Naive thymus-derived CD4-positive, alpha-beta T cell (primary cell): ENCODE measurements at regions of chr2 and their contacts with region 1.

Region 1: GRCh38 chr2:60881047-60881932 is at the start of gene REL:
- DNase-seq: peak; percentile 77 to 95 (median 88)
- ATAC-seq: peak; percentile 92
- H3K4me3 ChIP-seq: peak within 1 kb of the TSS; percentile 83
- H3K4me3 Mint-ChIP-seq: peak within 1 kb of the TSS; percentile 91 to 98 (median 96)
- H3K27ac ChIP-seq: peak within 1 kb of the TSS; percentile 100
- H3K27ac Mint-ChIP-seq: peak within 1 kb of the TSS; percentile 93 to 100 (median 98)
- H3K4me1 ChIP-seq: peaks cover 11 to 24% of the 10 kb centered on the region in 2 donors
- H3K4me1 Mint-ChIP-seq: peaks cover 22 to 39% (median 33%) of the 10 kb centered on the region in 7 donors
- H3K27me3 ChIP-seq: no peaks in the 10 kb centered on the region
- H3K27me3 Mint-ChIP-seq: no peaks in the 10 kb centered on the region
- total RNA-seq, gene REL: 18.9 to 78.8 (median 26.4) TPM

Region 2: GRCh38 chr2:60756191-60757041 is 124.9 kb before region 1 on chr2 and contains the start of gene PAPOLG:
- CTCF ChIA-PET with region 1: no interaction called
- POLR2A ChIA-PET with region 1: interaction called, 14 read pairs
- intact Hi-C with region 1: loop called (anchors 1 kb)
- DNase-seq: peak; percentile 90 to 97 (median 93)
- ATAC-seq: peak; percentile 100
- H3K4me3 ChIP-seq: peak within 1 kb of the TSS; percentile 86
- H3K4me3 Mint-ChIP-seq: peak within 1 kb of the TSS; percentile 94 to 100 (median 98)
- H3K27ac ChIP-seq: peak within 1 kb of the TSS; percentile 85
- H3K27ac Mint-ChIP-seq: peak within 1 kb of the TSS; percentile 94 to 100 (median 98)
- H3K4me1 ChIP-seq: peaks cover 0 to 13% of the 10 kb centered on the region in 2 donors
- H3K4me1 Mint-ChIP-seq: peaks cover 24 to 53% (median 46%) of the 10 kb centered on the region in 7 donors
- H3K27me3 ChIP-seq: no peaks in the 10 kb centered on the region
- H3K27me3 Mint-ChIP-seq: no peaks in the 10 kb centered on the region
- total RNA-seq, gene PAPOLG: 15.1 to 42.4 (median 22.9) TPM

Region 3: DNA sequence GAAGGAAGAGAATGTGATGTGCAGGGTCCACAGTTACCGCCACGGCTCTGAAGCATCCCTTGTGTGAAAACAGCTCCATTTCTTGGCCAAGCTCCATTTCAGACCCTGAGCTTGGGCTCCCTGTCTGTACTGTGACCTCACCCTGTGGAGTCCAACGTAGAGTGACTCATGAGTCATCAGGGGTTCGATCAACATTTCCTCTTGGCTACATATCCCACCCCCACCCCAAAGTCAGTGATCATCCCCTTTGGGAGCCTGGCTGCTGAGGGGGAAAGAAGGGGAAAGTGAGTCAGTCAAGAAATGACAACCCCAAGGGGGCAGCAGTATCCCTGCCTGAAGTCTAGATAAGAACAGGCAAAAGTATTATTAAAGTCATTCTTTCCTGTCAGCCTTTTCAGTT is 63.0 kb before region 1 on chr2:
- CTCF ChIA-PET with region 1: interaction called, 3 read pairs
- POLR2A ChIA-PET with region 1: interaction called, 5 read pairs
- intact Hi-C with region 1: loop called (anchors 1 kb)
- DNase-seq: peak in 2 of 9 donors; percentile 29 to 53
- ATAC-seq: no peak
- H3K4me3 ChIP-seq: no peak overlapping the region
- H3K4me3 Mint-ChIP-seq: peak overlapping the region in 2 of 10 donors; percentile 5 to 34
- H3K27ac ChIP-seq: no peak overlapping the region
- H3K27ac Mint-ChIP-seq: peak overlapping the region in 7 of 9 donors; percentile 28 to 92 (median 61)
- H3K4me1 ChIP-seq: peaks cover 24% of the 10 kb centered on the region in 2 donors
- H3K4me1 Mint-ChIP-seq: peaks cover 22 to 46% (median 37%) of the 10 kb centered on the region in 7 donors
- H3K27me3 ChIP-seq: no peaks in the 10 kb centered on the region
- H3K27me3 Mint-ChIP-seq: peaks cover 0 to 3% (median 0%) of the 10 kb centered on the region in 5 donors

Region 4: DNA sequence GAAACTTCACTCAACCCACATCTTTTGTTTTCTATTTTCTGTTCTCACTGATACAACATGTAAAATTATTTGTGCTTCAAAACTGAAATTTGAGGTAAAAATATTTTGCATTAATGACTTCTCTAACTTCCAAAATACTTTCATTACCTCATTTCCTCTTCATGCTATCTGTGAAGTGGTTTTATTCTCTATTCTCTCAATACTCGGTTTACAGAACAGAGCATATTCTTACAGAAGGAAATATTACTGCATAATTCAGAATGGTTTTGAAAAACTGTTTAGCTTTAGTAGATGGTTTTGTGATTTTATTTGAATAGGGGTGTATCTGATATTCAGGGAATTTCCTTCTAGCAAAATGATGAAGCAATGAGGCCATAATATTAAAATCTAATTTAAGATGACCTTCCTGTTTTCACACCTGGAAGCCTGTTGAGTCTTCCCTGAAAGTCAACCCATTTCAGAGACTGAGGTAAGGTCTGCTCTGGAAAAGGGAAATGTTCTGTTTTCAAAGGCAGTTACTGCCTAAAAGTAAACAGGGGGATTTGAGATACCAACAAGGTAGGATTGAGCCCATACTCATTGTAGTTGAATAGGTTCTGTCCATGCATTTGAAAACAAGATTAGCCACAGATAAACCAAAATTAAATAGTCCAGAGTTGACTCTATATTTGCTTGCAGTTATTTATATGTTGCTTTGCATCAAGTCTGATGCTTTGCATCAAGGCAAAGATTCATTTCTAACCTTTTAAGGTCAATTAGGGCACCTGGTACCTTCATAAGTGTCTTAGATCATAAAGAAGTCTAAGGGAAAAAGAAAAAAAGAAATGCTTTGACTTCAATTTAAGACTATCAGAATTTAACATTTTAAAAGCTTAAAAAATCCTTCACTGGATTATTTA is 85.5 kb after region 1 on chr2:
- CTCF ChIA-PET with region 1: no interaction called
- POLR2A ChIA-PET with region 1: interaction called, 5 read pairs
- intact Hi-C with region 1: loop called (anchors 2 to 5 kb)
- DNase-seq: peak in 3 of 9 donors; percentile 7 to 23 (median 9)
- ATAC-seq: peak; percentile 29
- H3K4me3 ChIP-seq: no peak overlapping the region
- H3K4me3 Mint-ChIP-seq: peak overlapping the region; percentile 31 to 78 (median 64)
- H3K27ac ChIP-seq: no peak overlapping the region
- H3K27ac Mint-ChIP-seq: peak overlapping the region; percentile 22 to 80 (median 59)
- H3K4me1 ChIP-seq: peaks cover 22 to 28% of the 10 kb centered on the region in 2 donors
- H3K4me1 Mint-ChIP-seq: peaks cover 12 to 54% (median 43%) of the 10 kb centered on the region in 7 donors
- H3K27me3 ChIP-seq: no peaks in the 10 kb centered on the region
- H3K27me3 Mint-ChIP-seq: no peaks in the 10 kb centered on the region

Region 5: GRCh38 chr2:61065715-61066709 is 184.7 kb after region 1 on chr2 and contains the start of gene SANBR:
- CTCF ChIA-PET with region 1: no interaction called
- POLR2A ChIA-PET with region 1: no interaction called
- intact Hi-C with region 1: loop called (anchors 1 to 2 kb)
- DNase-seq: peak; percentile 78 to 90 (median 83)
- ATAC-seq: peak; percentile 99
- H3K4me3 ChIP-seq: peak within 1 kb of the TSS; percentile 59
- H3K4me3 Mint-ChIP-seq: peak within 1 kb of the TSS; percentile 79 to 98 (median 95)
- H3K27ac ChIP-seq: peak within 1 kb of the TSS; percentile 49
- H3K27ac Mint-ChIP-seq: peak within 1 kb of the TSS; percentile 12 to 94 (median 79)
- H3K4me1 ChIP-seq: peaks cover 0 to 6% of the 10 kb centered on the region in 2 donors
- H3K4me1 Mint-ChIP-seq: peaks cover 0 to 17% (median 5%) of the 10 kb centered on the region in 7 donors
- H3K27me3 ChIP-seq: no peaks in the 10 kb centered on the region
- H3K27me3 Mint-ChIP-seq: peaks cover 0 to 2% (median 0%) of the 10 kb centered on the region in 5 donors
- total RNA-seq, gene SANBR: 2.0 to 5.9 (median 3.6) TPM

Region 6: GRCh38 chr2:61470965-61471904 is 589.9 kb after region 1 on chr2 and contains the start of gene USP34:
- CTCF ChIA-PET with region 1: no interaction called
- POLR2A ChIA-PET with region 1: no interaction called
- intact Hi-C with region 1: loop called in 1 of 2 experiments (anchors 2 kb)
- DNase-seq: peak; percentile 77 to 93 (median 88)
- ATAC-seq: peak; percentile 91
- H3K4me3 ChIP-seq: peak within 1 kb of the TSS; percentile 97
- H3K4me3 Mint-ChIP-seq: peak within 1 kb of the TSS; percentile 85 to 99 (median 96)
- H3K27ac ChIP-seq: peak within 1 kb of the TSS; percentile 98
- H3K27ac Mint-ChIP-seq: peak within 1 kb of the TSS; percentile 96 to 99 (median 97)
- H3K4me1 ChIP-seq: peaks cover 14 to 27% of the 10 kb centered on the region in 2 donors
- H3K4me1 Mint-ChIP-seq: peaks cover 11 to 45% (median 33%) of the 10 kb centered on the region in 7 donors
- H3K27me3 ChIP-seq: no peaks in the 10 kb centered on the region
- H3K27me3 Mint-ChIP-seq: no peaks in the 10 kb centered on the region
- total RNA-seq, gene USP34: 109 to 186 (median 165) TPM

Region 7: DNA sequence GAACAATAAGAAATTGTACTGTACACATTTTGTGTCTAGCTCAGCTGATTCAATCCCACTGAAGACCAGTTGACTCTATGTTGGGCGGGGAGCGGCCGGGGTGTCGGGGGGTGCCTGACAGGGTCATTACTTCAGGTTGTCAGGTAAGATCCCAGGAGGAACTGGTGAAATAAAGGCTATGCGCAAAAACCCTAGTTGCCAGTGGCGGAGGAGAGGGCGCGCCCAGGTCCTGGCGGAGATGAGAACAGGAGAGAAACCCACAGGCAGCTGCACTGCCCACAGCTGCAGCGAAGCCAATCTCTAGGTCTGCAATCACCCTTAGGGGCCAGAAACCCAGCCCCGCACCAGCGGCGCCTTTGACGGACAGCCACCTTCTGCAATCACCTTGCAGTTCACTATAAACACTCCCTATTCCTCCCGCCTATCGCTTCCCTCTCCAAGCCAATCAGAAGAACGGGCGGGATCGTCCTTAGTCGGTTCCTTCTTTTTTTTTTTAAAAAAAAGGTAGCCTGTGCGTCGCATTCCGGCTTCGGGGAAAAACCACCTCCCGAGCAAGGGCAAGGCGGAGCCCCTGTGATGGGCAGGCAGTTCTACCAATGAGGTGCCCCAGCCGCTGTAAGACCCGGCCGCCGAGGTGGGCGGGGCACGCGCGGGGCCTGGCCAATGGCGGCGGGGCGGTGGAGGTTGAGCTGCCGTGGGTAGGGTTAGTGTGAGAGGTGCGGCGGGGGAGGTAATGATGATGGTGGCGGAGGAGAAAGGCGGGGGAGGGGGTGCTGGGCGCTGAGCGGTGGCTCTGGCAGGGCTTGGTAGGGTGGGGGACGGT is 1823.9 kb after region 1 on chr2 and contains the start of gene EHBP1:
- CTCF ChIA-PET with region 1: no interaction called
- POLR2A ChIA-PET with region 1: no interaction called
- intact Hi-C with region 1: loop called in 1 of 2 experiments (anchors 5 kb)
- DNase-seq: peak; percentile 95 to 99 (median 98)
- ATAC-seq: peak; percentile 98
- H3K4me3 ChIP-seq: peak within 1 kb of the TSS; percentile 82
- H3K4me3 Mint-ChIP-seq: peak within 1 kb of the TSS; percentile 83 to 98 (median 92)
- H3K27ac ChIP-seq: peak within 1 kb of the TSS; percentile 72
- H3K27ac Mint-ChIP-seq: peak within 1 kb of the TSS; percentile 76 to 93 (median 84)
- H3K4me1 ChIP-seq: peaks cover 0 to 25% of the 10 kb centered on the region in 2 donors
- H3K4me1 Mint-ChIP-seq: peaks cover 24 to 48% (median 31%) of the 10 kb centered on the region in 7 donors
- H3K27me3 ChIP-seq: no peaks in the 10 kb centered on the region
- H3K27me3 Mint-ChIP-seq: peaks cover 0 to 13% (median 0%) of the 10 kb centered on the region in 5 donors
- total RNA-seq, gene EHBP1: 23.8 to 31.5 (median 30.0) TPM